ENCODE measurements at regions of chr2 and their contacts with region 1.

Region 1: GRCh38 chr2:219492575-219492974 is 6.1 kb upstream of the GMPPA start:
- DNase-seq: no peak
- H3K4me3 ChIP-seq: no peak overlapping the region
- H3K27ac ChIP-seq: no peak overlapping the region
- H3K4me1 ChIP-seq: peaks cover 0 to 20% (median 7%) of the 10 kb centered on the region in 4 experiments
- H3K27me3 ChIP-seq: peaks cover 0 to 83% (median 32%) of the 10 kb centered on the region in 5 experiments

Region 2: GRCh38 chr2:219475697-219476651 is 16.6 kb before region 1 on chr2:
- CTCF ChIA-PET with region 1: interaction called, 78 read pairs
- POLR2A ChIA-PET with region 1: no interaction called
- DNase-seq: peak; percentile 41 to 63 (median 59)
- H3K4me3 ChIP-seq: no peak overlapping the region
- H3K27ac ChIP-seq: no peak overlapping the region
- H3K4me1 ChIP-seq: peaks cover 0 to 2% (median 0%) of the 10 kb centered on the region in 4 experiments
- H3K27me3 ChIP-seq: peaks cover 0 to 17% (median 6%) of the 10 kb centered on the region in 5 experiments